K562 (cell line): ENCODE measurements at regions of chr3 and their contacts with region 1.

Region 1: DNA sequence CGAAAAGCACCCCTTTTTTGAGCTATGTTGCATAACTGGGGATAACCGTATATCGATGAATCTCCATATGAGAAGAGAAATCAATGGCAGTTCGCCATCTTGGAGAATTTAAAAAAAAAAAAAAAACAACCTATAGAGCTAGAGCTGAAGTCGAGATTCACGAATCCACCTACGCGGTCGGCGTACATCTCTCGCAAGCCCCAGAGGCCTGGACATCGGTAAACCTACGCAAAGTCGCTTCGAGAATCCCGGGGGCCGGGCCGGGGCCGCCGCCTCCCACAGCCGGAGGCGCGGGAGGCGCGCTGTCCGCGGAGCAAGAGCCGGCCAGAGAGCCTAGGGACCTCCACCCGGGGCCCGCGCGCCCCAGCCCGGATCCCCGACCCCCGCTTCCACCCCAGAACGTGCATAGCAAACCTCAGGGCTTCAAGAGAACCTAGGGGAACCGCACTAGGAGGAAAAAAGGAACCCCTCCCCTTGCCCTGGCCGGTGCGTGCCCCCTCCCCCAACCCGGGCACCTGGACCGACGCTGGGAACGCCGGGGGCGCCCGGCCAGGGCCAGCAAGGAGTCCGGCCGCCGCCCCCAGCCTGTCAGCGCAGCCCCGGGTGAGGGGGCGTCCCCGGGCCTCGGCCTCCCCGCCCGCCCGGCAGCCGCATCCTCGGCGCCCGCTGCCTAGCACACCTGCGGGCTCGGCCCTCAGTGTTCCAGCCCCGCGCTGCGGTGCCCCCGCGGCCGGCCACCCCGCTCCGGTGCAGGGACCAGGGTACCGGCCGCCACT is 567 bp downstream of the PFN2 start:
- DNase-seq: peak in 2 of 4 experiments; percentile 9 to 14
- ATAC-seq: no peak
- H3K4me3 ChIP-seq: peak overlapping the region; percentile 45
- H3K27ac ChIP-seq: no peak overlapping the region
- H3K4me1 ChIP-seq: peaks cover 0 to 18% of the 10 kb centered on the region in 2 experiments; a peak in 3 of 5 replicates
- H3K27me3 ChIP-seq: peaks cover 6 to 13% of the 10 kb centered on the region in 2 experiments; a peak in 3 of 5 replicates
- CTCF ChIP-seq: no peak
- EP300 ChIP-seq: no peak
- POLR2A ChIP-seq: no peak
- RAD21 ChIP-seq: no peak

Region 2: GRCh38 chr3:149879872-149880271 is 90.3 kb before region 1 on chr3:
- CTCF ChIA-PET with region 1: no interaction called
- POLR2A ChIA-PET with region 1: no interaction called
- in situ Hi-C with region 1: no loop called
- intact Hi-C with region 1: no loop called
- DNase-seq: peak; percentile 6 to 55 (median 8)
- ATAC-seq: peak; percentile 94
- H3K4me3 ChIP-seq: no peak overlapping the region
- H3K27ac ChIP-seq: no peak overlapping the region
- H3K4me1 ChIP-seq: no peaks in the 10 kb centered on the region; a peak in 1 of 5 replicates
- H3K27me3 ChIP-seq: no peaks in the 10 kb centered on the region
- CTCF ChIP-seq: peak; percentile 31 to 60 (median 59); a peak in 5 of 6 replicates
- EP300 ChIP-seq: no peak
- POLR2A ChIP-seq: no peak
- RAD21 ChIP-seq: no peak; a peak in 1 of 4 replicates

Region 3: DNA sequence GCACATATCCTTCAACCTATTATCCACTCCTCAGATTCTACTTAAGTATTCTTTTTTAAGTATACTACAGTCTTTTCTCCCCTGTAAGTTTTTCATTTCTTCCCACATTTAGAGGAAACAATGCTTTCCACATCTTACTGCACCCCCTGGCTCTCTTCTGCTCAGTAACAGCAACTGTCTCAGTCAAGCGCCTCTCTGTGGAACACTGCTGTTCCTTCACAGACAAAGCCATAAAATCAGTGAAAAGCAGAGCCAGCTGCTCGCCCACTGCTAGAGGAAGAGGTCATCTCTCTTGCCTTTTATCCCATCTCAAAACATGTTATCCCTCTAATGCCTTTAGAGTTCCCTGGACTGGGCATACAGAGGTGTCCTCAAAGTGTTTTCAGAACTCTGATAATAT is 551.3 kb after region 1 on chr3:
- CTCF ChIA-PET with region 1: no interaction called
- POLR2A ChIA-PET with region 1: no interaction called
- in situ Hi-C with region 1: loop called (anchors 25 kb)
- intact Hi-C with region 1: no loop called
- DNase-seq: peak in 1 of 4 experiments; percentile 16
- ATAC-seq: peak; percentile 82
- H3K4me3 ChIP-seq: no peak overlapping the region
- H3K27ac ChIP-seq: no peak overlapping the region
- H3K4me1 ChIP-seq: peaks cover 0 to 4% of the 10 kb centered on the region in 2 experiments; a peak in 1 of 5 replicates
- H3K27me3 ChIP-seq: no peaks in the 10 kb centered on the region
- CTCF ChIP-seq: peak in 2 of 3 experiments; percentile 28 to 63; a peak in 4 of 6 replicates
- EP300 ChIP-seq: no peak
- POLR2A ChIP-seq: no peak
- RAD21 ChIP-seq: peak in 1 of 2 experiments; percentile 36; a peak in 1 of 4 replicates